H1 (cell line): ENCODE measurements at regions of chrX and their contacts with region 1.

Region 1: GRCh38 chrX:40013266-40014195 is 84.2 kb downstream of the BCOR start:
- DNase-seq: peak in 1 of 2 experiments; percentile 65
- H3K4me3 ChIP-seq: peak overlapping the region; percentile 24 to 62 (median 32); a peak in 7 of 8 replicates
- H3K27ac ChIP-seq: no peak overlapping the region
- H3K4me1 ChIP-seq: peaks cover 6 to 22% (median 14%) of the 10 kb centered on the region in 4 experiments
- H3K27me3 ChIP-seq: peaks cover 34 to 60% (median 49%) of the 10 kb centered on the region in 4 experiments
- CTCF ChIP-seq: no peak
- EP300 ChIP-seq: no peak
- POLR2A ChIP-seq: no peak
- RAD21 ChIP-seq: no peak

Region 2: GRCh38 chrX:40090050-40090804 is 76.7 kb after region 1 on chrX:
- CTCF ChIA-PET with region 1: no interaction called
- POLR2A ChIA-PET with region 1: interaction called, 13 read pairs
- DNase-seq: peak in 1 of 2 experiments; percentile 58
- H3K4me3 ChIP-seq: peak overlapping the region; percentile 47 to 79 (median 71)
- H3K27ac ChIP-seq: no peak overlapping the region
- H3K4me1 ChIP-seq: peaks cover 11 to 30% (median 24%) of the 10 kb centered on the region in 4 experiments
- H3K27me3 ChIP-seq: peaks cover 0 to 24% (median 12%) of the 10 kb centered on the region in 4 experiments; a peak in 5 of 7 replicates
- CTCF ChIP-seq: no peak
- EP300 ChIP-seq: no peak
- POLR2A ChIP-seq: peak in 1 of 2 experiments; percentile 25; a peak in 2 of 3 replicates
- RAD21 ChIP-seq: no peak

Region 3: DNA sequence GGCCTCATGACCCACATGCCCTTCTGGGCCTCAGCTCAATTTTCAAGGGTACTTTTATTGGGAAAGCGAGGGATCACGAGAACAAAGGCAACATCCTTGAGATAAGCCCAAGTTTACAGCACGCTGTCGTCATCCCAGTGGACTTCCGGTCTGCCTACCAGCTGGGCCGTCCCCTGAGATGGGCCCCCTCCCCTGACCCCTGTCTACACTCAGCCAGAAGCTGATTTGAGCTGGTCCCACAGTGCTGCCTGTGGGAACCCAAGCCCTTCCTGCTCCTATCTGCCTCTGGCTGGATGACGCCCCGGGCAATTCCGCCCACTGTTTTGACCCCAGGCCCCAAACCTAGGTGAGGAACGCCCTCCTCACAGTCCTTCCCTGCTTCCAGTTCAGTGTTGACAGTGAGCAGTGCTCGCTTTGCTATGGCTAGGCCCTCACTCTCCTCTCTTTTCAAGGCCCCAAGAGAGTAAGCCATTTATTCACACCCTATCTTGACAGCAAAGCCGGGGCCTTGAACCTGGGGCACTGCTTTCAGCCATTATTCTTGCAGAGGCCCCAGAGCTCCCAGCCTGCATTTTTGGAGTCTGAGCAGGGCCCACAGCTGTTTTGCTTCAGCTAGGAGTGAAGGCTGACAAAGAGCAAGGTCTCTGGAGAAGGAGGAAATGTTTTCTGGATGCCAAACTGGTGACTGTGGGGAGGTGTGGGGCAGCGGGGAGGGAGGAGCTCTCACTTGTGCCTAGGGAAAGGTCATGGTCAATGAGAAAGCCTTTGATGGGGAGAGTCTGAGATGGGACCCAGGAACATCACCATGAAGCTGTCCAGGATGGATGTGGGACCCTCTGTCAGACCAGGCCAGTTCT is 248.9 kb after region 1 on chrX:
- CTCF ChIA-PET with region 1: no interaction called
- POLR2A ChIA-PET with region 1: no interaction called
- DNase-seq: no peak
- H3K4me3 ChIP-seq: no peak overlapping the region
- H3K27ac ChIP-seq: no peak overlapping the region
- H3K4me1 ChIP-seq: peaks cover 0 to 9% (median 5%) of the 10 kb centered on the region in 4 experiments; a peak in 4 of 7 replicates
- H3K27me3 ChIP-seq: no peaks in the 10 kb centered on the region; a peak in 1 of 7 replicates
- CTCF ChIP-seq: no peak
- EP300 ChIP-seq: no peak
- POLR2A ChIP-seq: no peak
- RAD21 ChIP-seq: no peak